ENCODE measurements at regions of chr4 and their contacts with region 1.

Region 1: GRCh38 chr4:144174401-144175067 is 34.0 kb upstream of the GYPA start:
- DNase-seq: peak in 3 of 7 donors; percentile 11 to 27 (median 17)
- H3K4me3 ChIP-seq: no peak overlapping the region
- H3K27ac ChIP-seq: no peak overlapping the region
- H3K4me1 ChIP-seq: no peaks in the 10 kb centered on the region
- H3K27me3 ChIP-seq: no peaks in the 10 kb centered on the region
- CTCF ChIP-seq: peak; percentile 13 to 59 (median 46)
- POLR2A ChIP-seq: no peak

Region 2: GRCh38 chr4:143819029-143819428 is 355.5 kb before region 1 on chr4:
- intact Hi-C with region 1: no loop called
- DNase-seq: no peak
- H3K4me3 ChIP-seq: no peak overlapping the region
- H3K27ac ChIP-seq: no peak overlapping the region
- H3K4me1 ChIP-seq: no peaks in the 10 kb centered on the region
- H3K27me3 ChIP-seq: no peaks in the 10 kb centered on the region
- CTCF ChIP-seq: no peak
- POLR2A ChIP-seq: no peak

Region 3: GRCh38 chr4:144787365-144788258 is 613.1 kb after region 1 on chr4:
- intact Hi-C with region 1: loop called in 1 of 2 experiments (anchors 10 kb)
- DNase-seq: no peak
- H3K4me3 ChIP-seq: no peak overlapping the region
- H3K27ac ChIP-seq: no peak overlapping the region
- H3K4me1 ChIP-seq: no peaks in the 10 kb centered on the region
- H3K27me3 ChIP-seq: no peaks in the 10 kb centered on the region
- CTCF ChIP-seq: peak; percentile 29 to 62 (median 46)
- POLR2A ChIP-seq: no peak

Region 4: DNA sequence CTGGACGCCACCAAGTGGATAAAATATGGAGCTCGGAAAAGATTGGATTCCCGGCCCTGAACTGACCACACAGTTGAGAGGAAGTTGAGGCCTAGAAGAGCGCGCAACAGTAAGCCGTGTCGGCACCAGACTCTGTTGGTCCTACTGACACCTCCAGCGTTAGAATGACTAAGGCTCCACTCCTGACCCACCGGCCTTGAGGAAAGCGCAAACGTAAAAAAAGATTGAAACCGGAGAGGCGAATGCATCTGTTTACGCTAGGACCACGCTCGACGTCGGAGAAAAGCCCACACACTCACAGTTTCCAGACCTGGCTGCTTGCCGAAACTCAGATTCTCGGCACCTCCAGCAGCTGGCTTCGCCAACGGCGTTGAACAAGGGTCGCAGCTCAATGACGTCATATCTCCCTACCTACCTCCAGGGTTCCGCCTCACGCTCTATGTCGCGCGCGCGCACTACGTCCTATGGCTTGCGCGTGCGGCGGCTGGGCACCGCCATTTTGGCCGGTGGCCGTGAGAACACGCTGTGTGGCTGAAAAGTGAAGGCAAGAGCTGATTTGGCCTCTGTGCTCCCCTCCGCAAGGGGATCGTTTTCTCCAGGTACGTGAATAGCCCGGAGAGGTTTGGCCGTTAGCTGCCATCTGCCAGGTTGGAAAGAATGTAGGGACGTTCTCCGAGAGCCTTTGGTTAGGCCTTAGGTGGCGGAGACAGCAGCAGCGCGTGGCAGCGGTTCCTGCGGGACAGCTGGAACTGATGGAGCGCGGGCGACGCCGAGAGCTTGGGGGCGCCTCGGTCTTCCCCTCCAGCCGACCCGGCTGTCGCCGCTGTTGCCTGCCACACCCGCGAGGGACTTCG is 923.5 kb after region 1 on chr4 and contains the starts of genes ABCE1 and ANAPC10:
- intact Hi-C with region 1: loop called in 1 of 2 experiments (anchors 10 kb)
- DNase-seq: peak; percentile 95 to 98 (median 98)
- H3K4me3 ChIP-seq: peak within 1 kb of the TSS; percentile 35 to 89 (median 65)
- H3K27ac ChIP-seq: peak within 1 kb of the TSS; percentile 79 to 97 (median 94)
- H3K4me1 ChIP-seq: peaks cover 19 to 52% of the 10 kb centered on the region in 2 donors
- H3K27me3 ChIP-seq: no peaks in the 10 kb centered on the region
- CTCF ChIP-seq: peak in 4 of 6 experiments; percentile 23 to 47 (median 30)
- POLR2A ChIP-seq: peak; percentile 45 to 52
- total RNA-seq, gene ABCE1: 29.6 to 82.0 (median 53.8) TPM
- total RNA-seq, gene ANAPC10: 15.6 to 51.6 (median 21.3) TPM

Measured in adrenal gland (tissue), 19 donors.